Dorsolateral prefrontal cortex (tissue), 120 donors: ENCODE measurements at regions of chr1 and their contacts with region 1.

Region 1: GRCh38 chr1:214464445-214465287 is 86.7 kb downstream of the PTPN14 start:
- DNase-seq: peak in 5 of 10 donors; percentile 27 to 55 (median 41)
- H3K4me3 ChIP-seq: no peak overlapping the region
- H3K27ac ChIP-seq: peak overlapping the region in 44 of 59 donors; percentile 5 to 85 (median 62)
- H3K27me3 ChIP-seq: no peaks in the 10 kb centered on the region
- CTCF ChIP-seq: no peak

Region 2: GRCh38 chr1:214446772-214447556 is 17.7 kb before region 1 on chr1:
- intact Hi-C with region 1: loop called in 1 of 2 experiments (anchors 1 kb)
- DNase-seq: no peak
- H3K4me3 ChIP-seq: peak overlapping the region in 33 of 59 donors; percentile 1 to 57 (median 27)
- H3K27ac ChIP-seq: peak overlapping the region in 43 of 59 donors; percentile 0 to 72 (median 40)
- H3K27me3 ChIP-seq: no peaks in the 10 kb centered on the region
- CTCF ChIP-seq: no peak